IMR-90 (cell line): ENCODE measurements at regions of chr9 and their contacts with region 1.

Region 1: DNA sequence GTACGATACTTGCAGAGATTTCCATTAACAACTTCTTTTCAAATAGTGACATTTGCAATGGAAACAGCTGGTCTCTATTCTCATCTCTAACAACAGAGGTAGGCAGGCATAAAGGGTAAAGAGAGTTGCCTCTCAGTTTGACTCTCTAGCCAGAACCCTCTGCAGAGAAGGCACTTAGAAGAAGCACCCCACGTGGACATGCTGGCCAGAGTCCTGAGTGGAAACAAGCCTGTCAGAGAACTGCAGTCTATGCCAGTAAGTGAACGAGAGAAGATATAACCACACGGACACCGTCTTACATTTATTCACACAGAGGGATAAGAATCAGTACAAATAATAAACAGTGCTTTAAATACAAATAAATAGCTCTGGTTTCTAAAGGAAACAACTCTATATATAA is 11.0 kb upstream of the LHX6 start:
- DNase-seq: no peak
- ATAC-seq: no peak
- H3K4me3 ChIP-seq: no peak overlapping the region
- H3K27ac ChIP-seq: no peak overlapping the region
- H3K4me1 ChIP-seq: no peaks in the 10 kb centered on the region
- H3K27me3 ChIP-seq: no peaks in the 10 kb centered on the region
- CTCF ChIP-seq: no peak
- POLR2A ChIP-seq: no peak
- RAD21 ChIP-seq: no peak

Region 2: DNA sequence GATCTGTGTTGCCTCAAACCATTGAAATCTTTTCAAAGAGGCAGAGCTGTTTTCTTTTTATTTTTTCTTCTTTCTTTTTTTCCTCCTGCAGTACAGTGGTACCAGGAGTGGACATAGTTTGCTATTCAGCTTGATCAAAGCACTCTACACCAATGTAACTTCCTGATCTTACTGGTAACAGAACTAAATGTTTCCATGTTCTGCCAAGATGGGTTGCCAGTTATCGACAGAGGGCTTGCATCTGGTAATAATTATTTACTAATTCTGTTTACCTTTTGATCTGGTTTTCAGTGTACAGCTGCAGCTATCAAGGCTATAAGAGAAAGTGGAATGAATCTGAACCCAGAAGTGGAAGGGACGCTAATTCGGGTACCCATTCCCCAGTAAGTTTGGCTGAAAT is 51.7 kb after region 1 on chr9:
- CTCF ChIA-PET with region 1: no interaction called
- POLR2A ChIA-PET with region 1: no interaction called
- dilution Hi-C with region 1: no loop called
- in situ Hi-C with region 1: no loop called
- intact Hi-C with region 1: loop called (anchors 5 kb)
- DNase-seq: no peak
- ATAC-seq: no peak
- H3K4me3 ChIP-seq: no peak overlapping the region
- H3K27ac ChIP-seq: no peak overlapping the region
- H3K4me1 ChIP-seq: peaks cover 3% of the 10 kb centered on the region
- H3K27me3 ChIP-seq: no peaks in the 10 kb centered on the region
- CTCF ChIP-seq: no peak
- POLR2A ChIP-seq: no peak
- RAD21 ChIP-seq: no peak